IMR-90 (cell line): ENCODE measurements at regions of chr12 and their contacts with region 1.

Region 1: DNA sequence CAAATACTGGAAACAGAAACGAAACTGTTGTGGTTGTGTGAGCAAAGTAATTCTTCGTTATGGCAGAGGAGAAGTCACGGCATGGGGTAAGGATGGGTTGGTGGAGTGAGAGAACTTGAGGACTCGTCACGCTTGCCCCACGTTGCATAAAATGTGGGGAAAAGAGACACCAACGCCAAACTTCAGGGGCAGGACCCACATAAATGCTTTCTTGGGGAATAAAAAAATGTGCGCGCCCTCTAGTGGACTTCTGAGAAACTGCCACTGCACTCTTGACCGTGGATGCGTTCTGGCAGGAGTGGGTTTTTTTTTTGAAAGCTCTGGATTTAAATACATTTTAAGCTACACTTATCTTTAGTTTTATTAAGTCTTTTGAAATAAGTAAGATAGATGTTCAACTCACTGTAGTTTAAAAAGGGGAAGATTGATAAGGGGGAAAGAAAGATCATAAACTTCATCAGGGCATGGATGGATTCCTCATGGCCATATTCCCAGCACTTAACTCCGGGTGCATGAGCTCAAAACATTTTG is 4.1 kb upstream of the IGF1 start:
- DNase-seq: peak; percentile 41
- ATAC-seq: peak; percentile 51
- H3K4me3 ChIP-seq: no peak overlapping the region
- H3K27ac ChIP-seq: no peak overlapping the region
- H3K4me1 ChIP-seq: peaks cover 4% of the 10 kb centered on the region; the same call in 1 of the 2 replicates
- H3K27me3 ChIP-seq: no peaks in the 10 kb centered on the region
- CTCF ChIP-seq: peak; percentile 79
- POLR2A ChIP-seq: no peak
- RAD21 ChIP-seq: peak; percentile 64

Region 2: DNA sequence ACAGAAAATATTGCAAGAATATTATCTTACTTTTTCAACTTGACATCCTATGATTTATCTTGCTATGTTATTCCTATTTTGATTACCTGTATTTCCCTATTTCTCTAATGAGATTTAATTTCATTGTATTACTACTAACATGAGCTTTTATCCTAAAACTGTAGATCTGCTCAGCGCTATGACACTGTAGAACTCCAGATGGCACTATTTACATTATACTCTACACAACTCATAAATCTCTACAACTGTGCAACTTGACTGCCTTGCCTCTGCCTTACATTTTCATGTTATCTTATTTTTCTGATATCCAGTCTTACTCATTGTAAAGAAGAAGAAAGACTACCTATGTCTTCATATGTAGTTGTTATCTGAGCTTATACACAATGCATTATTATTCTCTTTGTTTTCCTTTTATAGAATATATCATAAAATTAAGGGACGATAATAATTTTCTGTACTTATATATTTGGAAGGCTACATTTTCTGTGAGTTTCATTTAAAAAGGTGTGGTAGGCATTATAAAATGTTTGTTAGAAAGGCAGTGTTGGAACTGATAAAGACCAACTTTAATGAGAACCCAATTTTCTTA is 388.7 kb before region 1 on chr12:
- CTCF ChIA-PET with region 1: interaction called, 5 read pairs
- POLR2A ChIA-PET with region 1: no interaction called
- dilution Hi-C with region 1: no loop called
- in situ Hi-C with region 1: no loop called
- intact Hi-C with region 1: loop called (anchors 2 kb)
- DNase-seq: peak; percentile 61
- ATAC-seq: peak; percentile 88
- H3K4me3 ChIP-seq: no peak overlapping the region
- H3K27ac ChIP-seq: no peak overlapping the region
- H3K4me1 ChIP-seq: peaks cover 3% of the 10 kb centered on the region; the same call in 1 of the 2 replicates
- H3K27me3 ChIP-seq: no peaks in the 10 kb centered on the region
- CTCF ChIP-seq: peak; percentile 57
- POLR2A ChIP-seq: no peak
- RAD21 ChIP-seq: peak; percentile 54

Region 3: DNA sequence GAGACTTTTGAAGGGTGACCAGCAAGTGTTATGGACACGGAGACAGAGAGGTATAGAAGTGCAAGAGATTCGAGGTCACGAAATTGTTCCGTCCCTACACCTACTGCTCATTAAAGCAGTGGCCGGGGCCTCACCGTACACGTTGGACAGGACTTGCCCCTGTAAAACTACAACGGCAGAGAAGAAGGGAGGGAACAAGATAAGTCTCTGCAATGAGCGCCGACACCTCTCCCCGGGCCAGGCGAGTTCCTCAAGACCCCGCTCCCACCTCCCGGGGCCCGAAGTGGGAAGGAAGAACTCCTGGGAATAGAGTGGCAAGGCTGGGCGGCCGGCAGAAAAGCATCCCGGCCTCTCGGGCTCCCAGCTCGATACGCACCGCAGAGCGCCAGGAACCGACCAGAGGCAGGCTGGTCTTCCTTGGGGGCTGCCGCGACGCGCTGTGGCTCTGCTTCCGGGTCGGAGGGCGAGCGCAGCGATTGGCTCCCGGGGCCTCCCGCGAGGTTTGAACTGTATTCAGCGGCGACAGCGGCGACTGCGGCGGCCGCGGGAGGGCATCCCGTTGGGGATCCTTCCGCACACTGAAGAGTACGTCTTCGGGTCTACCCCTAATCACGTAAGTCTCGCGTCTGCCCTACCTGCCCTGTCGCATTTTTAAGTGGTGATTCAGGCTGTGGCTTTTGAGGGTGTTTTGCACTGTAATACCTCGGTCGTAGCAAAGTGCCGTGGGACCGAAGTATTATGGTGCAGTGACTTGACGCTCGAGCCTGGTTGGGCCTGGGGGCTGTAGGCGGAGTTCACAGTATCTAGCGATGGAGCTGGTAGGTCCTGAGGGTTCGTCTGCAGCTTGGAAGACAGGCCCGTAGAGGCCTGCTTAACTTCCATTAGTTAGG is 364.6 kb before region 1 on chr12 and contains the starts of genes NUP37 and PARPBP:
- CTCF ChIA-PET with region 1: no interaction called
- POLR2A ChIA-PET with region 1: no interaction called
- dilution Hi-C with region 1: no loop called
- in situ Hi-C with region 1: no loop called
- intact Hi-C with region 1: loop called (anchors 2 kb)
- DNase-seq: peak; percentile 81
- ATAC-seq: peak; percentile 98
- H3K4me3 ChIP-seq: peak within 1 kb of the TSS; percentile 86
- H3K27ac ChIP-seq: peak within 1 kb of the TSS; percentile 75
- H3K4me1 ChIP-seq: peaks cover 4% of the 10 kb centered on the region; the same call in 1 of the 2 replicates
- H3K27me3 ChIP-seq: no peaks in the 10 kb centered on the region
- CTCF ChIP-seq: no peak
- POLR2A ChIP-seq: peak; percentile 77
- RAD21 ChIP-seq: no peak
- total RNA-seq, gene NUP37: 55.0 and 71.9 TPM in 2 replicates
- total RNA-seq, gene PARPBP: 7.2 and 15.6 TPM in 2 replicates

Region 4: GRCh38 chr12:102169922-102170621 is 314.4 kb before region 1 on chr12:
- CTCF ChIA-PET with region 1: interaction called, 4 read pairs
- POLR2A ChIA-PET with region 1: no interaction called
- dilution Hi-C with region 1: no loop called
- in situ Hi-C with region 1: no loop called
- intact Hi-C with region 1: loop called (anchors 2 kb)
- DNase-seq: peak; percentile 63
- ATAC-seq: peak; percentile 74
- H3K4me3 ChIP-seq: no peak overlapping the region
- H3K27ac ChIP-seq: no peak overlapping the region
- H3K4me1 ChIP-seq: peaks cover 7% of the 10 kb centered on the region
- H3K27me3 ChIP-seq: no peaks in the 10 kb centered on the region
- CTCF ChIP-seq: peak; percentile 57
- POLR2A ChIP-seq: no peak
- RAD21 ChIP-seq: peak; percentile 53

Region 5: GRCh38 chr12:102300824-102301461 is 183.6 kb before region 1 on chr12:
- CTCF ChIA-PET with region 1: interaction called, 6 read pairs
- POLR2A ChIA-PET with region 1: no interaction called
- dilution Hi-C with region 1: no loop called
- in situ Hi-C with region 1: loop called (anchors 25 kb)
- intact Hi-C with region 1: loop called (anchors 2 kb)
- DNase-seq: peak; percentile 73
- ATAC-seq: peak; percentile 80
- H3K4me3 ChIP-seq: no peak overlapping the region
- H3K27ac ChIP-seq: no peak overlapping the region
- H3K4me1 ChIP-seq: no peaks in the 10 kb centered on the region
- H3K27me3 ChIP-seq: no peaks in the 10 kb centered on the region
- CTCF ChIP-seq: peak; percentile 57
- POLR2A ChIP-seq: no peak
- RAD21 ChIP-seq: peak; percentile 65

Region 6: DNA sequence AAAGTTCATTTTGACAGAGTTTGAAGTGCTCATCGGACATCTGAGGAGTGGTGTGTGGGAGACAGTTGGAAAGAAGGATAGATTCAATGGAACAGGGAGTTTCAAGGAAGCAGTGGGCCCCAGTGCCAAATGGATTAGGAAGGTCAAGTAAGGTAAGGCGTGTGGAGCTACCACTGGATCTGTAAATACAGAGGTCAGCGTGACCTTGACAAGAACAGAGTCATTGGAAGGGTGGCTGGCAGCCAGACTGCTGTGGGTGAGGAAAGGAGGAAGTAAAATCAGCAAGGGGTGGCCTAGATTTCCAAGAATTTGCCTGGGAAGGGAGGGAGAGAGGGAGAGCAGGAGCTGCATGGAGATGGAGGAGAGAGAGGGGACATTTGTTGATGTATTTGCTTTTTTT is 64.0 kb after region 1 on chr12:
- CTCF ChIA-PET with region 1: no interaction called
- POLR2A ChIA-PET with region 1: no interaction called
- dilution Hi-C with region 1: no loop called
- in situ Hi-C with region 1: no loop called
- intact Hi-C with region 1: no loop called
- DNase-seq: no peak
- ATAC-seq: no peak
- H3K4me3 ChIP-seq: no peak overlapping the region
- H3K27ac ChIP-seq: no peak overlapping the region
- H3K4me1 ChIP-seq: peaks cover 3% of the 10 kb centered on the region
- H3K27me3 ChIP-seq: no peaks in the 10 kb centered on the region
- CTCF ChIP-seq: no peak
- POLR2A ChIP-seq: no peak
- RAD21 ChIP-seq: no peak